Posterior cingulate gyrus (tissue), 11 donors: ENCODE measurements at regions of chr5 and their contacts with region 1.

Region 1: DNA sequence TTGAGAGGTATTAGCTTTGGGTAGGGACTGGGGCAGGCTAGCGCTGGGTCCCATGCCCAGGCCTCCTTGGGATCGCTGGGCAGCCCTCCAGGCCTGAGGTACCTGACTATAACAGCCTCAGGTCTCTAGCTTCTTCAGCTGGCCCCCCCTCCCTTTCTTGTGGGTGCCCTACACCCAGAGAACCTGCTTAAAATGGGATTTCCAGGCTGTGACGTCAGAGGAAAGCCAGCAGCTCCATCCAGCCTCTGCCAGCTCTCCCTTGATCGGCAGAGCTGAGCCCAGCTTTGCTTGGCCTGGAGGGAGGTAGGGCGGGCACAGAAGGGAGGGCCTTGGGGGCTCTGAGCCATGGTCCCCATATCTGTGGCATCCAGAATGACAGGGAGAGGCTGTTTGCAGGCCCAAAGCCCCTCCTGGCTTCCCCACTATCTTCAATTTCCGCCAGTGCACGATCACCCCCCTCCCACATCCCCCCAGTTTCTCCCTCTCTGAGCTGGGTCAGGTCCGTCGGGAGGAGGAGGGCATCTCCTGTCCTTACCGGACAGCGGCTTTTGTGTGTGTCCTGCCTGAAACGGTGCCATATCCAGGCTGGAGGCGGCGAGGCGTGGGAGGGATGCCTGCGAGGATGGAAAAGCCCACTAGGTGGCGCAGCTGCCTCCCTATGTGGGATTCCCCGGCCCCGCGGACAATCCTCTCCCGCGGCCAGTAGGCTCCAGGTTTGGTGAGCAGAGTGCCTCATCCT is 10.8 kb downstream of the REEP2 start:
- DNase-seq: peak; percentile 74 to 98 (median 90)

Region 2: DNA sequence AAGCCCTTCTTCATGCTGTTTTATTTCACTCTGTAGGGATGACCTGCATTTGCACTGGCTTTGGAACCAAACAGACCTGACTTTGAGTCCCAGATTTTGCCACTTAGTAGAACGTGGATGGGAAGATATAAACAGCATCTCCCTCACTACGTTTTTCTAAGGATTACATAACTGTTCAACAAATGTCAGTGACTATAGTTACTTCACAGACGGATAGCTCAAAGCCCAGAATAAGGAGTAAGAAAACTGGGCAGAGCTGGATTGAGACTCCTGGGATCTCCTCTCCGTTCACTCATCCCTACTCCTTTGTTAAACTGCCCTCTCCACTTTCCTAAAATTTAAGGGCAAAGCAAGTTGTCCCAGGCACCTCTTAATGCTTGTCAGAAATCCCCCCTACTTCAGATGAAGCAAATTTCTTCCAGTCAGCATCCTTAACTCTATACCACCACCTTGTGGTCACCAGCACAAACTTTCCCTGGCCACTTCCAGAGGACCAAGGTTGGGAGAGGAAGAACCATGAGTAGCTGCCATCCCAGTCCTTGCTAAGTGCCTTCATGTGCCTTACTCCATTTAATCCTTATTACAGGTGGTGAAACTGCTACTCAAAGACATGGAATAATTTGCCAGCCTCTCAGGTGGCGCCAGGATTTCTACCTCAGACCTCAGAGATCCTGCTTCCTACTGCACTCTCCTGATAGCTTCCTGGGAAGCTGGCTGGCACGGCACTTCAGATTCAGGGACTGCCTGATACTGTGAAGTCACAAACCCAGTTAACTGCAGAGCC is 54.0 kb after region 1 on chr5:
- intact Hi-C with region 1: loop called (anchors 1 kb)
- DNase-seq: peak in 3 of 10 donors; percentile 41 to 50 (median 47)